ENCODE measurements at regions of chr10 and their contacts with region 1.

Region 1: GRCh38 chr10:70758757-70759514 is 26.2 kb downstream of the TBATA start:
- DNase-seq: peak; percentile 66
- ATAC-seq: peak; percentile 81
- H3K4me3 ChIP-seq: no peak overlapping the region
- H3K27ac ChIP-seq: no peak overlapping the region
- H3K4me1 ChIP-seq: no peaks in the 10 kb centered on the region
- H3K27me3 ChIP-seq: peaks cover 33% of the 10 kb centered on the region
- CTCF ChIP-seq: peak; percentile 87
- POLR2A ChIP-seq: no peak
- RAD21 ChIP-seq: peak; percentile 90

Region 2: GRCh38 chr10:70461215-70461986 is 297.5 kb before region 1 on chr10:
- CTCF ChIA-PET with region 1: no interaction called
- POLR2A ChIA-PET with region 1: no interaction called
- dilution Hi-C with region 1: no loop called
- in situ Hi-C with region 1: loop called (anchors 5 kb)
- intact Hi-C with region 1: loop called (anchors 1 kb)
- DNase-seq: peak; percentile 50
- ATAC-seq: peak; percentile 82
- H3K4me3 ChIP-seq: no peak overlapping the region
- H3K27ac ChIP-seq: no peak overlapping the region
- H3K4me1 ChIP-seq: peaks cover 2% of the 10 kb centered on the region; the same call in 1 of the 2 replicates
- H3K27me3 ChIP-seq: peaks cover 24% of the 10 kb centered on the region
- CTCF ChIP-seq: peak; percentile 87
- POLR2A ChIP-seq: no peak
- RAD21 ChIP-seq: peak; percentile 91

Region 3: DNA sequence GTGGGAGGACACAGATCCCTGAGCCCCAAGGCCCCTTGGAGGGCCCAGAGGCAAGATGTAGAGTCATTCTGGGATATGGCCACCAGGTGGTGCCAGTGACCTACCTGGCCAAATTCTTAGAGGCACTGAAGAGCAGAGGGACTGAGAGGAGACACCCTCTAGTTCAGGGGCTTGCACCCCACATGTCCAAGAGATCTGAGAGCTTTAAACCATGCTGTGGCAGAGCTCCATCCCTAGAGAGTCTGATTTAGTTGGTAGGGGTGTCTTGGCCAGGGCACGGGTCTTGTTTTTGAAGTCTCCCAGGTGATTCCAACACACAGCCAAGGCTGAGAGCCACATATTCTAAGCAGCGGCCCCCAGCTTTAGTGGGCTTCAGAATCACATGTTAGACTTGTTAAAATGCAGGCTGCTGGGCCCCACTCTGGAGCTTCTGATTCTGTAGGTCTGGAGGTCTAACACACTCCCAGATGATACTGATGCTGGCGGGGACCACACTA is 208.9 kb before region 1 on chr10:
- CTCF ChIA-PET with region 1: interaction called, 3 read pairs
- POLR2A ChIA-PET with region 1: no interaction called
- dilution Hi-C with region 1: no loop called
- in situ Hi-C with region 1: loop called (anchors 5 kb)
- intact Hi-C with region 1: loop called (anchors 1 kb)
- DNase-seq: peak; percentile 48
- ATAC-seq: peak; percentile 73
- H3K4me3 ChIP-seq: no peak overlapping the region
- H3K27ac ChIP-seq: no peak overlapping the region
- H3K4me1 ChIP-seq: peaks cover 9% of the 10 kb centered on the region
- H3K27me3 ChIP-seq: peaks cover 3% of the 10 kb centered on the region; the same call in 1 of the 2 replicates
- CTCF ChIP-seq: peak; percentile 80
- POLR2A ChIP-seq: no peak
- RAD21 ChIP-seq: peak; percentile 92

Region 4: DNA sequence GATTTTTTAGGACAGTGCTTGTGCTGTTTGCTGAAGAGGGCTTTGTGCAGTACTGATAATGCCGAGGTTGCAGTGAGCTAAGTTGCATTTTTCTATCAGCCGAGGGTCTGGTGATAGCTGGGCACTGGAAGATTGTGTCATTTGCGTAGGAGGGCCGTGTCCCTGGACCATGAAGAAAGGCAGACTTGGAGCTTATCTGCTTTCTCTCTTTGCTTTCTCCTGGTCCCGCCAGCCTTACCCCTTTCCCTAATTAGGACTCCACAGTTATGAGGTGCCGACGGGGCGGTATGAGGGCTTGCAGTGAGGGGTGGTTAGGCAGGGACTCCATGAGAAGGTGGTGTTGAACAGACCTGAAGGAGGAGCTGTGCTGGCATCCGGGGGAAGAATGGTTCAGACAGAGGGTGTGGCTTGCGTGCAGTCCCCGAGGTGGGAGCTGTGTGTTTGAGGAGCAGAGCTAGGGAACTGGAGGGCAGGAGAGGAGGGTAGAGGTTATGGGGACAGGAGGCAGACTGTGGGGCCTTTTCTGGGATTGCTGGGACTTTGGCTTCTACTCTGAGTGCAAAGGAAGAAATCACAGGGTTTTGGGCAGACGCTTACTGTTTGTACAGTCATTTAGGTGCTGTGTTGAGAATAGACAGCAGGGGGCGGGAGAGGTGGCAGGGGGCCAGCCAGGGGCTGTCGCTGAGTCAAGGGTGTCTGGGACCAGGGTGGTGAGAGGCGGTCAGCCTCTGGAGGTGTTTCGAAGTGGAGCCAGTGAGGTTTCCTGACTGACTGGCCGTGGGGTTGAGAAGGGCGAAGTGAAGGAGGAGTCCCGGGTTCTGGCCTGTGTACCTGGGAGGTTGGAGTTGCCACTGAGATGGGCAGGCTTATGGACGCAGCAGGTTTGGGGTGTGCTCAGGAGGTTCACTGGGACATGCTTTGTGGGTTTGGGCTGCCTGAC is 199.8 kb before region 1 on chr10:
- CTCF ChIA-PET with region 1: interaction called, 4 read pairs
- POLR2A ChIA-PET with region 1: no interaction called
- dilution Hi-C with region 1: no loop called
- in situ Hi-C with region 1: no loop called
- intact Hi-C with region 1: loop called (anchors 1 kb)
- DNase-seq: peak; percentile 34
- ATAC-seq: peak; percentile 78
- H3K4me3 ChIP-seq: no peak overlapping the region
- H3K27ac ChIP-seq: no peak overlapping the region
- H3K4me1 ChIP-seq: peaks cover 3% of the 10 kb centered on the region; the same call in 1 of the 2 replicates
- H3K27me3 ChIP-seq: peaks cover 11% of the 10 kb centered on the region
- CTCF ChIP-seq: peak; percentile 58
- POLR2A ChIP-seq: no peak
- RAD21 ChIP-seq: peak; percentile 55

Region 5: GRCh38 chr10:70619271-70620019 is 139.5 kb before region 1 on chr10:
- CTCF ChIA-PET with region 1: no interaction called
- POLR2A ChIA-PET with region 1: no interaction called
- dilution Hi-C with region 1: no loop called
- in situ Hi-C with region 1: no loop called
- intact Hi-C with region 1: loop called (anchors 1 kb)
- DNase-seq: peak; percentile 29
- ATAC-seq: no peak
- H3K4me3 ChIP-seq: no peak overlapping the region
- H3K27ac ChIP-seq: no peak overlapping the region
- H3K4me1 ChIP-seq: no peaks in the 10 kb centered on the region; the same call in 1 of the 2 replicates
- H3K27me3 ChIP-seq: peaks cover 7% of the 10 kb centered on the region
- CTCF ChIP-seq: peak; percentile 42
- POLR2A ChIP-seq: no peak
- RAD21 ChIP-seq: peak; percentile 56